Activated B cell treated with CpG ODN at 0.5 μM for 24 hours (primary cell): ENCODE measurements at regions of chr12 and their contacts with region 1.

Region 1: DNA sequence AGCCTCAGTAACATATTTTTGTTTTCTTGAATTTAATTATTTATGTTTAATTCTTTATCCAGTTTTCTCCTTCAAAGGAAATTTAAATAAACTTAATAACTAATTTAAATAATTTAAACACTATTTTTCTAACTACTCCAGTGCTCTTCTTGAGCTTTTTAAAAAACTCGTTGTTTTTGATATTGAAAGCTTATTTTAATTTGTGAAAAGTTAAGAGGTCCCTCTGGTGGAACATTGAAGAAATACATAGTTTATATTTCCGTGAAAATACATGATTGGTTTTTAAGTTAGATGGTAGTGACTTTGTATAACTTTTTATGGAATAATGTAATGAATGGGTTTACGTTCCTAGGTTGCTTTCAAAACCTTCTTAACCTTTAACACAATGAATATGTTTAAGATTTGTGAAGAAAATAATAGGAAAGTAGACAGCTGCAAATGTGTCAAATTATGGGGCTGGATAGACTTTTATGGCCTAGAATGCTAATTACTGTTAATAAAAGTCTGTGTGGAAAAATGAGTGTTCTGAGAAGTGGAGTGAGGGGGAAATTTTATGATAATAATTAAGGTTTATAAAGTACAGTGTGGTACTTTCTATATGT is 45.9 kb upstream of the MSRB3 start:
- DNase-seq: no peak
- ATAC-seq: peak; percentile 37
- H3K4me3 Mint-ChIP-seq: no peak overlapping the region
- H3K27ac Mint-ChIP-seq: peak overlapping the region; percentile 64
- H3K4me1 Mint-ChIP-seq: peaks cover 9% of the 10 kb centered on the region
- H3K27me3 Mint-ChIP-seq: no peaks in the 10 kb centered on the region
- CTCF ChIP-seq: no peak

Region 2: DNA sequence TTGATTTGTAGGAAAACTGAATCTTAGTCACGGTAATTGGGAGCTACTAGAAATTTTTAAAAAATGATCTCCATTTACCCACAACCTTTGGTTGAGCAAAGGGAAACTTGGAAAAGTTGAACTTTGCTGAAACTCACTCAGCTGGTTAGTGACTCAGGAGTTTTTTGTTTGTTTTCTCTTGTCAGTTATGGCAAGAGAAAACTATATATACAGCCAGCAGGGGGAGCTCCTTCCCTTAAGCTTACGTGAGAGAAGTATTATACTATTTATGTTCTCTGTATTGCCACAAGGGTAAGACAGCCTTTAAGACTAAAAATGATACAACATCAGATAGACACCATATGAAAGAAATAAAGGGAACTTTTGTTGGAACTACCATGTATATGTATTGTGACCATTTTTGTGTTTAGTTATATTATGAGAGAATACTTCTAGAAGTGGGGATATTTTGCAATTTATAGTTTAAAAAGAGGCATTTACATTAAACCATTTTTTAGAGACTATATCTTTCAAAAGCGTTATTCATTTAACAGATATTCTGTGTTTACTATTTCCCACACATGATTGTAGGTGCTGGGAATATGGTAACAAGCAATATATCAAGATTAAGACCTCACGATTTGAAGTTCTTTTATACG is 436.2 kb before region 1 on chr12:
- CTCF ChIA-PET with region 1: interaction called, 6 read pairs
- POLR2A ChIA-PET with region 1: no interaction called
- intact Hi-C with region 1: loop called (anchors 1 kb)
- DNase-seq: no peak
- ATAC-seq: peak; percentile 88
- H3K4me3 Mint-ChIP-seq: no peak overlapping the region
- H3K27ac Mint-ChIP-seq: no peak overlapping the region
- H3K4me1 Mint-ChIP-seq: no peaks in the 10 kb centered on the region
- H3K27me3 Mint-ChIP-seq: peaks cover 15% of the 10 kb centered on the region
- CTCF ChIP-seq: peak; percentile 32

Region 3: GRCh38 chr12:65067383-65067782 is 165.2 kb before region 1 on chr12:
- CTCF ChIA-PET with region 1: no interaction called
- POLR2A ChIA-PET with region 1: no interaction called
- intact Hi-C with region 1: loop called (anchors 2 kb)
- DNase-seq: no peak
- ATAC-seq: no peak
- H3K4me3 Mint-ChIP-seq: no peak overlapping the region
- H3K27ac Mint-ChIP-seq: no peak overlapping the region
- H3K4me1 Mint-ChIP-seq: no peaks in the 10 kb centered on the region
- H3K27me3 Mint-ChIP-seq: peaks cover 11% of the 10 kb centered on the region
- CTCF ChIP-seq: no peak

Region 4: DNA sequence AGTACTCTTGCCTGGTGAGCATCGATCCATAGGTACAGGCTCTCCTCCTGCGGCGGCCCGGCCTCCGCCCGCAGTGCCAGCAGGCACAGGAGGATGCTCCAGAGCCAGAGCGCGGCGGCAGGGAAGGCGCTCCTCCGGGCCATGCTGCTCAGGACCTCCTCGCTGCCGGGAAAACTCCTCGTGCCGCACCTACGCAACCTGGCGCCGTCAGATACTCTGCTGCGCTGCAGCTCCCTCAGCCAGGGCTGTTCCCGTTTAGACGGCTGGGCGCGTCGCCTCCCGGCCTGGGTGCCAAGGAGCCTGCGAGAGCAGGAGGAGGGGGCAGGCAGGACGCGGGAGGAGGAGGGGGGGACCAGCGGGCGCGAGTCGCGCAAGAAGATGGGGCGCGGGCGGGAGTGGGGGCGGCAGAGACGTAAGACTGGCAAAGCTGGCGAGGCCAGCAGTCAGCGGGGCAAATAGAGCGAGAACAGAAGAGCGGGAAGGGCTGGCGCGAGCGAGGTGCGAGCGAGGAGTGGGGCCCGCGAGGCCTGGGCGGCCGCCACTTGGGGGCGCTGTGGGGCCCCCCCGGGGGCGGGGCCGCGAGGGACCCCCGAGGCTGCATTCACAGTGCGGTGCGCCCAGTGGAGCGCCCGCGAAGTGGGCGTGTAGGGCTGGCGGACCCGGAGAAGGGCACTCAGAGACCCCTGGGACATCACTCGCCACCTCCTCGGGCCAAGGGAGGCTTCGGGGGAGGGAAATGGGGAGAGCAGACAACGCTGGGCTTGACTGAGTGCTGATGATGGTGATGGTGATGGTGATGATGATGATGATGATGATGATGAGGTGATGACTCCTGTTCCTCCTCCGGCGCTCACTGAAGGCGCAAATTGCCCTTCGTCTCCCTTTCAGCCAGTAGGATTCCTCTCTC is 111.3 kb before region 1 on chr12 and contains the start of gene WIF1:
- CTCF ChIA-PET with region 1: interaction called, 3 read pairs
- POLR2A ChIA-PET with region 1: no interaction called
- intact Hi-C with region 1: loop called (anchors 1 kb)
- DNase-seq: peak; percentile 32
- ATAC-seq: peak; percentile 47
- H3K4me3 Mint-ChIP-seq: peak within 1 kb of the TSS; percentile 55
- H3K27ac Mint-ChIP-seq: no peak within 1 kb of the TSS
- H3K4me1 Mint-ChIP-seq: peaks cover 14% of the 10 kb centered on the region
- H3K27me3 Mint-ChIP-seq: peaks cover 30% of the 10 kb centered on the region
- CTCF ChIP-seq: no peak
- total RNA-seq, gene WIF1: not detected in 2 replicates

Region 5: GRCh38 chr12:65209655-65210043 is 22.9 kb before region 1 on chr12:
- CTCF ChIA-PET with region 1: no interaction called
- POLR2A ChIA-PET with region 1: no interaction called
- intact Hi-C with region 1: no loop called
- DNase-seq: no peak
- ATAC-seq: peak; percentile 42
- H3K4me3 Mint-ChIP-seq: peak overlapping the region; percentile 69
- H3K27ac Mint-ChIP-seq: peak overlapping the region; percentile 85
- H3K4me1 Mint-ChIP-seq: peaks cover 56% of the 10 kb centered on the region
- H3K27me3 Mint-ChIP-seq: no peaks in the 10 kb centered on the region
- CTCF ChIP-seq: no peak

Region 6: GRCh38 chr12:65432606-65433005 is 200.0 kb after region 1 on chr12:
- CTCF ChIA-PET with region 1: no interaction called
- POLR2A ChIA-PET with region 1: no interaction called
- intact Hi-C with region 1: no loop called
- DNase-seq: no peak
- ATAC-seq: no peak
- H3K4me3 Mint-ChIP-seq: no peak overlapping the region
- H3K27ac Mint-ChIP-seq: no peak overlapping the region
- H3K4me1 Mint-ChIP-seq: no peaks in the 10 kb centered on the region
- H3K27me3 Mint-ChIP-seq: no peaks in the 10 kb centered on the region
- CTCF ChIP-seq: no peak